ENCODE measurements at regions of chr6 and their contacts with region 1.

Region 1: DNA sequence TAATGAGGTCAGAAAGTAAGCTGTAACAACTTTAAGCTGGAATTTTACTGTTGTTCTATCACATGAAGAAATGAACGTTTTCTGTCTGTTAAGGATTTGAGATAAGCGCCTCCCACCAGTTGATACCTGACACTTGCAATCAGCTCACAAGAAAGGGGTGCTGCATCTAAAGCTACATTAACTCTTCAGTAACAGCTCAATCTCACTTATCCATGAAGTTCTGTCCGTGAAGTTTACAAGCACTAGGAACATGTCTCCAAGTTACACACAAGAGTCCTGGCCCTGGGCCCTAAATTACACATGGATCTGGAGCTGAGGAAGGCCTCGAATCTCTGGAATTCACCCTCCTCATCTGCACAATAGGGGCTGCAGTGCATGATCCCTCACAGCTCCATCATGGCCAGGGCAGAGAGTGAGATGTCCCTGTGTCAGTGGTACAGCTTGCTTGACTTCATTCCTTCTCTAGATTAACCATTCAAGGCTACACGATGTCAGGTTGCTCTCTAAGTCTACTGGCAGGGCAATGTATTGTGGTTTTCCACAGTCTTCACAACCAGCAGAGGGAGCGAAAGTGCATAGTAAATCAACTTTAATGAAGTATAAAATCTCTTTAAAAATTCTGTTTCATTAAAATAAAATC is 182.4 kb upstream of the MCHR2 start:
- DNase-seq: peak; percentile 54
- H3K4me3 ChIP-seq: no peak overlapping the region
- H3K27ac ChIP-seq: no peak overlapping the region
- H3K4me1 ChIP-seq: no peaks in the 10 kb centered on the region
- H3K27me3 ChIP-seq: no peaks in the 10 kb centered on the region
- CTCF ChIP-seq: peak; percentile 29 to 33
- POLR2A ChIP-seq: no peak

Region 2: GRCh38 chr6:99894815-99895214 is 281.6 kb before region 1 on chr6:
- CTCF ChIA-PET with region 1: no interaction called
- POLR2A ChIA-PET with region 1: no interaction called
- dilution Hi-C with region 1: no loop called
- intact Hi-C with region 1: no loop called
- DNase-seq: no peak
- H3K4me3 ChIP-seq: no peak overlapping the region
- H3K27ac ChIP-seq: no peak overlapping the region
- H3K4me1 ChIP-seq: no peaks in the 10 kb centered on the region
- H3K27me3 ChIP-seq: no peaks in the 10 kb centered on the region
- CTCF ChIP-seq: no peak
- POLR2A ChIP-seq: no peak

Region 3: DNA sequence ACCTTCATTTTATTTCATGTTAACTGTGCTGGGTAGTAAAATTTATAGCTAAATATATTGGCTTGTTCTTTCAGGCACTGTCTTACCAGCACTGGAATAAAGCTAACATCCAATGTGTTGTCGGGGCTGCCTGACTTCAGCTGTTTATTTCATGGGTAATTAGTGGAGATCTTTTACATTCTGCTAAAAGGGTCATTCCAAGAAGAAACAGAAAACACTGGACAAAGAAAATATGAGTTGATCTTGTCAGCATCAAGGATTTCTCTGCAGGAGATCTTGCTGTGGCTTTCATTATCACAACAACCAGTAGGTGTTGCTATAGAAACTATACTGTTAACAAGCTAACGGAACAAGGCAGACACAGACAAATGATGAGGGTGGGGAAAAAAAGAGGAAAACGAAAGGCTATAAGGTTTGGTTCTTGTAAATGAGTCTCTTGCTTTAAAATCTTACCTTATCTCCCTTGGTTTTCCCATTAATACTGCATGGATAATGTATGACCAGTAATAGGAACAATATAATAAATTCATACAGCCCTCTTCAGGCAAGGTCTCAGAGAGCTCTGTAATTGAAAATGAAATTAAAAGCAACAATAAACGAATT is 81.5 kb after region 1 on chr6:
- CTCF ChIA-PET with region 1: interaction called, 13 read pairs
- POLR2A ChIA-PET with region 1: no interaction called
- dilution Hi-C with region 1: no loop called
- intact Hi-C with region 1: no loop called
- DNase-seq: peak; percentile 75
- H3K4me3 ChIP-seq: peak overlapping the region in 2 of 3 experiments; percentile 7 to 50
- H3K27ac ChIP-seq: peak overlapping the region; percentile 50
- H3K4me1 ChIP-seq: peaks cover 12% of the 10 kb centered on the region
- H3K27me3 ChIP-seq: no peaks in the 10 kb centered on the region
- CTCF ChIP-seq: no peak
- POLR2A ChIP-seq: no peak

Region 4: DNA sequence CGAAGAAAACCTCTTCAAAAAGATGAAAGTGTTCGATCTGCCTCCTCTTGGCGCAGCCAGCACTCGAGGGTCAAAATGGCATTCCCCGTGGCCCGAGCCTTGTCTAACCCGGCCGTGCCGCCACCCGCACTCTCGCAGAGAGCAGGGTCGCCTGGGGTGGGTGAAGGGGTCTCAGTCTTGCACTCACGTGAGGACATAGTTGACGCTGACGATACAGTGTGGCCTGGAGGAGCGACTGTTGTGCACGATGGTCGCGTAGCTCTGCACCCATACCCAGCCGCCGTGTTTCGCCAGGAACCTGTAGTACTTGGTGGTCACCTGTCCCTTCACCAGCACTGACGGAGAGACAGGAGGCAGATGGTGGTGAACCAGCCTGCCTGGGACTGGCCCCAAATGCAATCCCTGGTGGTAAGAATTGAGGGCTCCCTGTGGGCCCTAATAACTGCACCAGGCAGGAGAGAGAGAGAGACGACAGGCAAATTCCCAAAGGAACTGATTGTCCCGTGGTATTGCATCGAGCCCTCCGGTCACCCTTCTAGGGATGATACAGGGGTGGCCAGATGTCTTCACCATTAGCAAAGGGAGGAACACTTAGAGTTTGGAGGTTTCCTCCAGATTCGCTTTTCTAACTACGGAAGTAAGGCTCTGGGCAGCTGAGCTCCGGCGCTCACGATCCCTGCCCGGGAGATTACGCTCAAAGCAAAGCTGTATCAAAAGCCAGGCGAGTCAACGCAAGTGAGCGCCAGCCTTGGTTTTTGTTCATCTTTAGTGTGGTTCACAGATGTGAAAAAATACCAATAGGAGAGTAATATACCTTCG is 270.9 kb after region 1 on chr6:
- CTCF ChIA-PET with region 1: interaction called, 10 read pairs
- POLR2A ChIA-PET with region 1: no interaction called
- dilution Hi-C with region 1: no loop called
- intact Hi-C with region 1: no loop called
- DNase-seq: no peak
- H3K4me3 ChIP-seq: peak overlapping the region in 2 of 3 experiments; percentile 12 to 23
- H3K27ac ChIP-seq: no peak overlapping the region
- H3K4me1 ChIP-seq: peaks cover 11% of the 10 kb centered on the region
- H3K27me3 ChIP-seq: peaks cover 36 to 56% of the 10 kb centered on the region in 2 experiments
- CTCF ChIP-seq: no peak
- POLR2A ChIP-seq: no peak

Region 5: DNA sequence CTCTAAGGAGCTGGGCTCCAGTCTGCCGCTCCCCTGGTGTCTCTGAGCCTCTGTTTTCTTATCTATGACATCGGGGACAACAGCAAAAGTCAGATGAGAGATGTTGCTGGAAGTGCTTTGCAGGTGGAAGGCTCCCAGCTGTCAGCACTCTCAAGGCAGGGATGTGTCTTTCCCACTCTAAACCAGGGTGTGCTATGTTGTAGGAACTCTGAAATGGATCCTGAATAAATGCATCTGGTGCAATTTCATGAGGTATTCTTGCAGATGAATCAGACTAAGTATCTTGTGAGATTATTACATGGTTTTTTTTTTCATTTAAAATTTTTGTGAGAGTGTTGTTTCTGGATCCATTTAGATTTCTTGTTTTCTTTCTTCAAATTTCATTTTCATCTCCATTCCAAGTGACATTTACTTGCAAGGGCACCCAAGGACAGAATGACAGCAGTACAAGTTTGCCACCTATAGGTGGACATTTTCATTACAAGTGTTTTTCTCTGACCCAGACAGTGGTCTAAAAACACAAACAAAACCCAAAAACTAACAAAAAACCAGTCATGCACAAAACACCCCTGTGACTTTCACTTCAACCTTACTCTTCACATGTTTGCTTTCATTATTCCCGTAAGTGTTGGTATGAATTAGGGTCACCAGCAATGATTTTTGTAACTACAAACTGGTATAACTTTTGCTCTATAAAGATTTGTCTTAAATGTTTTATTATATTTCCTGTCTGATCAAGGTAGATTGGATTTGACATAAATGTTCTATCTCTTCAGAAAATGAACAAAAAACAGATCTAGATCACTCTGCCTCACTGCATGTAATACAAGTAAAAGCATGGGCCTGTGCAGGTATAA is 303.0 kb after region 1 on chr6:
- CTCF ChIA-PET with region 1: interaction called, 14 read pairs
- POLR2A ChIA-PET with region 1: no interaction called
- dilution Hi-C with region 1: no loop called
- intact Hi-C with region 1: loop called (anchors 1 kb)
- DNase-seq: peak; percentile 68
- H3K4me3 ChIP-seq: no peak overlapping the region
- H3K27ac ChIP-seq: no peak overlapping the region
- H3K4me1 ChIP-seq: no peaks in the 10 kb centered on the region
- H3K27me3 ChIP-seq: peaks cover 0 to 5% of the 10 kb centered on the region in 2 experiments
- CTCF ChIP-seq: peak; percentile 40 to 55
- POLR2A ChIP-seq: no peak

Region 6: DNA sequence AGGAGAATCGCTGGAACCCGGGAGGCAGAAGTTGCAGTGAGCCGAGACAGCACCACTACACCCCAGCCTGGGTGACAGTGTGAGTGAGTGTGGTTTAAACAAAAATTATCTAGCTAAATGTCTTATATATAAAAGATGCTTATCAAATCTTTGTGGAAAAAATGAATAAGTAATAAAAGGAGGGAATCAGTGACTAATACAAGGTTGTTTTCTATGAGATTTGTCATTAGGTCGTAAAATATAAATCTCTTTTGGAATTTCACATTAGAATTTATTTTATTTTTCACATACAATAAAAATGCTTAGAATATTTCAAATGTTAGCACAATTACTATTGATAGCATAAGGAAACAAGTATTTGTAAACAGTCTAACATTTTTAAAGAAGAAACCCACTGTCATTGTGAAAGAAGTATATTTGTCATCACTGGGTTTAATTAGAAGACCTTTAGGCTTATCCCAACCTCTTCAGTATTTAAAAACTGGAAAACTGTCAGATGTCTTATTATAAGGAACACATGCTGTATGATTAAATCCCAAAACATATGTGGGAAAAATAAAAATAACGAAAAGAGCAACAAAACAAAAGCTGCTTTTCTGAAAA is 657.6 kb after region 1 on chr6:
- CTCF ChIA-PET with region 1: no interaction called
- POLR2A ChIA-PET with region 1: no interaction called
- dilution Hi-C with region 1: no loop called
- intact Hi-C with region 1: no loop called
- DNase-seq: no peak
- H3K4me3 ChIP-seq: no peak overlapping the region
- H3K27ac ChIP-seq: no peak overlapping the region
- H3K4me1 ChIP-seq: no peaks in the 10 kb centered on the region
- H3K27me3 ChIP-seq: no peaks in the 10 kb centered on the region
- CTCF ChIP-seq: no peak
- POLR2A ChIP-seq: no peak